GM23248 (cell line): ENCODE measurements at regions of chr11 and their contacts with region 1.

Region 1: GRCh38 chr11:43282607-43283440 is 29.0 kb upstream of the API5 start:
- DNase-seq: peak; percentile 52
- H3K4me3 ChIP-seq: no peak overlapping the region
- H3K27ac ChIP-seq: no peak overlapping the region
- H3K4me1 ChIP-seq: no peaks in the 10 kb centered on the region
- H3K27me3 ChIP-seq: peaks cover 14% of the 10 kb centered on the region

Region 2: DNA sequence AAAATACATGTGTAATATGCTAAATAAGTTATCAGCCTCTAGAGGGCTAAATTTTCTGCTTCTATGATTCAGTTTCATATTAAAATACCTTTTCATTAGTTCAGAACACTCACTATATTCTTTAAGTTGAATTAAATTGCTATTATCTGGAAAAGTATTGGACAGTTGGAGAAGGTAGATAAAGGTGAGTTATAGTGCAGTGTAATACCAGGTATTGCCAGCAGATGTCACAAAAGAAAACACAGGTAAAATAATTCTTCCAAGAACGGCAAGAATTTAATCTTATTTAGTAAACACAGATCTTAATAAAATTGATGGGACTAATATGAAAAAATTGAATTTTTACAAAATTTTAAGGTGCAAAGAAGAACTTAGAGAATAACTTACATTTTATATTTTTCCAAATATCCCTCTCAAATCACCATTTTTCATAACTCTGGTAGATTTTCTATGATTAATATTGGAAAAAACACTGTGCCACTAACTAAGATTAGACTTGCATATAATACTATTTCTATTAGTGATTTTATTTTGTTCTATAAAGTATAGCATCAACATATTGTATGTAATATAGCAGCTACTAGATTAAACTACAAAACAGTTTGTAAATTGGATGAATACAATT is 1821.7 kb before region 1 on chr11:
- in situ Hi-C with region 1: loop called (anchors 25 kb)
- DNase-seq: peak; percentile 13
- H3K4me3 ChIP-seq: no peak overlapping the region
- H3K27ac ChIP-seq: no peak overlapping the region
- H3K4me1 ChIP-seq: no peaks in the 10 kb centered on the region
- H3K27me3 ChIP-seq: no peaks in the 10 kb centered on the region

Region 3: GRCh38 chr11:42762348-42762747 is 520.5 kb before region 1 on chr11:
- in situ Hi-C with region 1: loop called (anchors 10 kb)
- DNase-seq: no peak
- H3K4me3 ChIP-seq: no peak overlapping the region
- H3K27ac ChIP-seq: no peak overlapping the region
- H3K4me1 ChIP-seq: no peaks in the 10 kb centered on the region
- H3K27me3 ChIP-seq: no peaks in the 10 kb centered on the region